Astrocyte of the cerebellum (primary cell): ENCODE measurements at regions of chr16 and their contacts with region 1.

Region 1: DNA sequence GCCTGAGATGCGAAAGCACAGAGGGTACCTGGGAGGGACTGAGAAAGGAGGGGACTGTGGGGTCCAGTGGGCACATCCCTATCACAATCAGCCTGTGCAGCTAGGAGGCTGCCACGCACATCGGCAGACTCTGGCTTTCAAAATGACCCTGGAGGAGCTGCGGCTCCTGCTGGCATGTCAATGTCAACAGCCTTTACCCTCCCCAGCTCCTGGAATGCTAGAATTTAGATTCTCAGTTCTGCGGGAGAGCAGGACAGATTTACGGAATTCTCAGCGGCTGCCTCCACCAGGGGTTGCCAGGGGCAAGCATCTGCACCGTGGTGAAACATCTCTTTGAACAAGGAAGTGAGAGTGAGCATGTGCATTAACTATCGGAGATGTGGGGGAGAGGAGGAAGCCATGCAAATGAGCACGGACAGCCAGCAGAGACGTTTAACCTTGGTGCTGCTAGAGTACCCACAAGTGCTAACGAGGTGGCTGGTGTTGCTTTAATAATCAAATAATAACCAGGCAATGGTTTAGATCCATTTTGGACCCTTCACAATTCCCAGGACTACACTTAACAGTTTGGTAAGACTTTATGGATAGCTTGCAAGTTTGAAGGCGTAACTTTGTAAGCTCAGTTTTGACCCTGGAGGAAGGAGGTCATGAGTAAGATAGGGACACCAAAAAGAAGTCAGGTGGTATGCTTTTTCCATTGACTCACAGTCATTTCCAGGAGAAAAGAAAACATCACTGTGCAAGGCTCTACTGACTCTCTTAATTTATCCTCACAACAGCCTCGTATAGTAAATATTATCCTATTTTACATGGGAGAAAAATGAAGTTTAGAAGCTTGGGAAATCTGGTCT is 54.1 kb downstream of the XYLT1 start:
- DNase-seq: no peak
- H3K4me3 ChIP-seq: no peak overlapping the region
- CTCF ChIP-seq: peak; percentile 24

Region 2: GRCh38 chr16:17350207-17350606 is 66.5 kb before region 1 on chr16:
- in situ Hi-C with region 1: loop called (anchors 5 kb)
- DNase-seq: no peak
- H3K4me3 ChIP-seq: no peak overlapping the region
- CTCF ChIP-seq: no peak

Region 3: DNA sequence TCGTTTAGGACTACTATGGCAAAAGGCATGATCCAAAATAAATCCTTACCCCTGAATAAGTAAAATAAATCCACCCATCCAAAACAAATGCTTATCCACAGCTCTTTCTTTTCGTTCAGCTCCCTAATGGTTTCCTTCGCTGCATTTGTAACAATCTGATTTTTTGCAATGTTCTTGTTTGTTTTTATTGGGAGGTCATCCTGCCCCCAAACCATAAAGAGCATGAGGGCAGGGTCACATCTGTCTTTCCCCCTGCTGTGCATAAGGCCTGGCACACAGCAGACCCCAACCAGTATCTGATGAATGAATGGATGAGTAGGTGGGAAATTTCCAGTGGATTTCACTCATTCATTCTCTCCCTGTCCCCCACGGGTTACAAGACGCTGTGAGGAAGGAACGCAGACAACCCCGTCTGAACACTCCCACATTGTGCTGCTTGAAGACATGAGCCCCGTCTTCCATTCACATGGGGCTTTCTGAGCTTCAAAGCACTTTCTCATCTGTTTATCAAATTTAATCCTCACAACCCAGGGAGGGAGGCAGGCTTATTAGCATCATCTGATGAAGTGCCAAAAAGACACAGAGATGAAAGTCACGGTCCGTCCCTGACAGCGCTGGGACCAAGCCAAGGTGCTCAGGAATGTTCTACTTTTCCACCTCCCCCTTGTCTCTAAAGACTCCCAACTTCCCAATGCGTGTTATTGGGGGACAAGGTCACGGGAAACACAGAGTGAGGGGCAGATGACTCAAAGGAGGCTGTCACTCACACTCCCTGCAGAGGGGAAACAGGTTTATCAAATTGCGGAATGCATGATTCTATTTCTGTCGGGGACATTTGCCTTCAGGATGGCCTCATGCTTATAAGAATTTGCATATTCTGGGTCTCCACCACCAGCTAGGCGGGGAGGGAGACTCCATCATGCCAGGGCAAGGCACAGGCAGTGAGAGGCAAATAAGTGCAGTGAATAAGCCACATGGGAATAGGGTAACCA is 43.1 kb after region 1 on chr16:
- in situ Hi-C with region 1: loop called (anchors 5 kb)
- DNase-seq: no peak
- H3K4me3 ChIP-seq: no peak overlapping the region
- CTCF ChIP-seq: no peak

Region 4: DNA sequence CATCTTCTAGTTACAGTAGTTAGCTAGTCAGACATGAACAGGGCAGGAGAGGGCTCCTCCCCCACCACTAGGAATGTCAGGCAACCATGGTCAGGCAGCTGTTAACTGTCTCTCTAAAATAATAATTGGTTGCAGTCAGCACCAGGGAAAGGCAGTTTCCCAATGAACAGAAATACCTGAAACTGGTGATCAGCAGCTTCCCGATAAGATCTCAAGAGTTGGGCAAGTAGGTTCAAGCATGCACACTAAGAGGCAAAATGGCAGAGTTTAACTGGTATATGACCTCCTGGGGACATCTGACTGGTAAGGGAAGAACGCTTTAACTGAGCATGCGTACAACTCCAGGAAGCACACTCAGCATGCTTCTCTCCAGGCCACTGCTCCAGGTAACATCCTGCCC is 66.7 kb after region 1 on chr16:
- in situ Hi-C with region 1: loop called (anchors 5 kb)
- DNase-seq: no peak
- H3K4me3 ChIP-seq: no peak overlapping the region
- CTCF ChIP-seq: no peak